PC-3 (cell line): ENCODE measurements at regions of chr9 and their contacts with region 1.

Region 1: DNA sequence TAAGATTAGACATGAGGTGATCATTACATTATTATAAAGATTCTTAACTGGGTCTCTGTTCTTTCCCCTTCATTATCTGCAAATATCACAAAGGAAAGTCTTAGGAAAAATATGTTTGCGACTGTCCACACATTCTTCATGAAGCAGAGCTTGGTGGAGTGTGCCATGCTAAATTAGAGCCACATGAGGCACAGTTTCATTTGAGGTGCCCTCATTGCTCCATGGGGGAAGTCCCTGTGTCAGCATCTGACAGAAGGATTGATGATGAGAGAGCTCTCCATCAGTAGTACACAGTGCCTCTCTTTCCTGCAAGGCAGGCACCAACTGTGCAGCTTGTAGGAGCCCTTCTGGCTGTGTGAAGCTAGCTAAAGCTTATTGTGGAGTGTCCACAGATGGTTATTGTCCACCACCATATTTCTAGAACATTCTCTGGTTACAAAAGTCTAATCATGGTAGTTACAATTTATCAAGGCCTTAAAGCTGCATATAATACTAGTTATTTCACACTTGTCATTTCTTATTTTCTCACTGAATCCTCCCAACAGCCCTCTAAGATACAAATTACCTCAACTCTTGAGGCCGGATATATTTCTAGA is 63.9 kb downstream of the C9orf152 start:
- DNase-seq: no peak
- ATAC-seq: no peak
- H3K4me3 ChIP-seq: no peak overlapping the region
- H3K27ac ChIP-seq: no peak overlapping the region
- H3K4me1 ChIP-seq: peaks cover 26% of the 10 kb centered on the region
- H3K27me3 ChIP-seq: no peaks in the 10 kb centered on the region
- CTCF ChIP-seq: no peak

Region 2: GRCh38 chr9:110069326-110070248 is 74.5 kb before region 1 on chr9:
- CTCF ChIA-PET with region 1: no interaction called
- POLR2A ChIA-PET with region 1: no interaction called
- intact Hi-C with region 1: loop called (anchors 5 kb)
- DNase-seq: peak; percentile 84
- ATAC-seq: peak; percentile 82
- H3K4me3 ChIP-seq: no peak overlapping the region; the same call in 1 of the 2 replicates
- H3K27ac ChIP-seq: peak overlapping the region; percentile 85
- H3K4me1 ChIP-seq: peaks cover 22% of the 10 kb centered on the region
- H3K27me3 ChIP-seq: no peaks in the 10 kb centered on the region
- CTCF ChIP-seq: no peak

Region 3: DNA sequence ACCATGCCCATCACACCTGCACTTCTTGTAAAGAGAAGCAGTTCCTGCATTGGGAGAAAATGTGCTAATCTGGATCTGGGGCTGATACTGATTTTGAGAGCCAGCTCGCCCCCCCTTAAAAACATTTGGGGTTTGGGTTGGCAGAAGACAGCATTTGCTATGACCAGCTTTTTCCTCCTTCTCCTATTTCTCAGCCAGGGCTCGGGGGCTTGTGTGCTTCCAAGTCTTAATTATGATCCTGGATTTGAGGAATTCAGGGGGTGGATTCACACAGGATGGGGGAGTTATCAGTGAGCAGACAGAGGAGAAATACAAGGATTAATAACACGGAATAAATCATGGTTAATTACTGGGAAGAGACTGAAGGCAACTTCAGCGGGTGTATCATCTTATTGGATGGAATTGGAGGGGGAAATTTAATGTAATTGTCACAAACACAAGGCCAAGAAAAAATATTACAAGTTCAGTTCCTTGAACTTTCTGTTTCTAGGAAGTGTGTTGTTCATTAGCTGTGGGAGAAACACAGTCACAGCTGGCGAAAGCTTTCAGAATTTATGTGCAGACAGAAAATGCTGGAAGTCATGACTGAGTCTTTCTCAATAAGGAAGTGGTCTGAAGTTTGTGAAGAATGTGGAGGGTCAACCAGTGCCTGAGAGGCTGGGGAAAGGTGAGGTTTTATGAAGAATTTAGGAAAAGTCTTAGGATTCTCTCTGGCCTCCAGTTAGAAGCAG is 48.6 kb after region 1 on chr9:
- CTCF ChIA-PET with region 1: no interaction called
- POLR2A ChIA-PET with region 1: no interaction called
- intact Hi-C with region 1: no loop called
- DNase-seq: no peak
- ATAC-seq: no peak
- H3K4me3 ChIP-seq: no peak overlapping the region
- H3K27ac ChIP-seq: no peak overlapping the region
- H3K4me1 ChIP-seq: peaks cover 4% of the 10 kb centered on the region
- H3K27me3 ChIP-seq: no peaks in the 10 kb centered on the region
- CTCF ChIP-seq: no peak

Region 4: DNA sequence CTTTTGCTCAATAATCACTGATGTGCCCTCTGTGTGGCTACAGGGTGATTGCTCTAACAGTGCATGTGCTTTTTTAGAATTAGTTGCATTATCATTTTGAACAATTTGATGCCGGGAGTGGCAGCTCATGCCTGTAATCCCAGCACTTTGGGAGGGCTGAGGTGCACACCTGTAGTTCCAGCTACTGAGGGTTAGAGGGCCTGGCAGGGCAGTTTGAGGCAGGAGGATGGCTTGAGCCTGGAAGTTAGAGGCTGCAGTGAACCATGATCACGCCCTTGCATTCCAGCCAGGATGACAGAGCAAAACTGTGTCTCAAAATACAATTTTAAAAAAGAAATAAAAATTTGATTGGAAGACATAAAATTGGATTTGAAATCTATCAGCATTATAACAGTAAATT is 84.9 kb after region 1 on chr9:
- CTCF ChIA-PET with region 1: no interaction called
- POLR2A ChIA-PET with region 1: no interaction called
- intact Hi-C with region 1: no loop called
- DNase-seq: peak; percentile 12
- ATAC-seq: no peak
- H3K4me3 ChIP-seq: no peak overlapping the region
- H3K27ac ChIP-seq: no peak overlapping the region
- H3K4me1 ChIP-seq: no peaks in the 10 kb centered on the region
- H3K27me3 ChIP-seq: no peaks in the 10 kb centered on the region
- CTCF ChIP-seq: no peak